Ascending aorta (tissue), 2 donors: ENCODE measurements at regions of chr13 and their contacts with region 1.

Region 1: GRCh38 chr13:35630551-35631275 is 154.2 kb upstream of the MAB21L1 start:
- DNase-seq: no peak
- H3K4me3 ChIP-seq: no peak overlapping the region
- H3K27ac ChIP-seq: no peak overlapping the region
- H3K4me1 ChIP-seq: no peaks in the 10 kb centered on the region
- H3K27me3 ChIP-seq: no peaks in the 10 kb centered on the region
- CTCF ChIP-seq: peak in 2 of 3 experiments; percentile 45 to 51

Region 2: DNA sequence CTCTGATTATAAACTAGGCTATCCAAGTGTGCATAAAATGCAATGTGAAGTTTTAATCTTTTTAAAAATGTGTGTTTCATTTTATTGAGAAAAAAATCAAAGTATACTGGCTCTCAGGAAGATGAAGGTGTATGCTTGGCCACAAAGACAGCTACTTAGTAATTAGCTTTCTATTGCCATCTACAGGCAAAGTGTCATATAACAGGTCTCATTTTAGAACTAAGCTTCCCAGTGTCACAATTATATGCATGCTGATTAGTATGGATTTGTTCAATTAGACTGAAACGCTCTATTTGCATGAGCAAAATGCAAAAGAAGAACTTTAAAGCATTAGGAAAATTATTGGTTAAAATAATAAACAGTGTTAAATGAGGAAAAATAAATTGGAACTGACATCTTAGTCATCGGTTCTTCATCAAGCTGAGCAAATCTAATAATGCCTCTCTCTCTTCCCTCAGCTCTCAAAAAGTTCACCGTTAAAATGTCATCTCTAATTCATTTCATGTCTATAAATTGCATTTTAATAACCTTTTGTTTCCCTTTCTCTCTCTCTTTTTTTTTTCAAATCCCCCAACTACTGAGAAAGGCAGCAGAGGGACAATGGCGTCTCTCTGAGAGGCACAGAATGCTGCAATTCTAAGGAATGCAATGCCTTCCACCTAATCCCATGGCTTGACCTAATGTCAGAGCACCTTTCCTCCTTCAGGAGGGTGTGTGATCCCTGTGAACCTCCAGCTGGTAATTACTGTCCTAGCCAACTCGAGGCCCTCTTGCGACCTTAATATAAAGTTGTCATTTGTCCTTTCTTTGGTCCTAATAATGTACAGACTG is 158.8 kb after region 1 on chr13:
- intact Hi-C with region 1: loop called (anchors 10 kb)
- DNase-seq: no peak
- H3K4me3 ChIP-seq: no peak overlapping the region
- H3K27ac ChIP-seq: no peak overlapping the region
- H3K4me1 ChIP-seq: no peaks in the 10 kb centered on the region
- H3K27me3 ChIP-seq: no peaks in the 10 kb centered on the region
- CTCF ChIP-seq: peak in 2 of 3 experiments; percentile 41 to 50

Region 3: GRCh38 chr13:36275190-36276002 is 644.7 kb after region 1 on chr13:
- intact Hi-C with region 1: no loop called
- DNase-seq: no peak
- H3K4me3 ChIP-seq: no peak overlapping the region
- H3K27ac ChIP-seq: no peak overlapping the region
- H3K4me1 ChIP-seq: no peaks in the 10 kb centered on the region
- H3K27me3 ChIP-seq: no peaks in the 10 kb centered on the region
- CTCF ChIP-seq: peak; percentile 13 to 66 (median 46)

Region 4: DNA sequence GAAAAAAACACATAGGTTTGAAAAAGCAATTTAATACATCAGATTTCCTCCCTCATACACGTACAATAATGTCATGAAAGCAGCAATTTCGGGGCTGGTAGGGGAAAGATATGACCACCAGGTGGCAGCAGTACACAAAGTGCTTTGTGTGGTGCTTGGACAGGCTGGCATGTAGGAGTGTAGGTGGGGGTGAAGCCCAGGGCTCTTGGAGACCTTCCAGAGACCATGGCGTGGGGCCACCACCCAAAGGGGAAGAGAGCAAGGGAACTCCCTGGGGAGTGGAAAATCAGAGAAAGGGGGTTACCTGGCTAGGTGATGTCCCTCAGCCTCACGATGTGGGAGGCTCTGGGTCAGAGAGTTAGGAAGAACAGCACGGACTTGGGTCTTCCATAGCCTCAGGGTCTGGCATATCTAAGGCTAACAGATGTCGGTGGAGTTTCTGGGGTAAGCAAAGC is 789.8 kb after region 1 on chr13:
- intact Hi-C with region 1: no loop called
- DNase-seq: peak in 1 of 2 donors; percentile 82
- H3K4me3 ChIP-seq: no peak overlapping the region
- H3K27ac ChIP-seq: no peak overlapping the region
- H3K4me1 ChIP-seq: no peaks in the 10 kb centered on the region
- H3K27me3 ChIP-seq: no peaks in the 10 kb centered on the region
- CTCF ChIP-seq: peak; percentile 25 to 82 (median 81)